ENCODE measurements at regions of chr14 and their contacts with region 1.

Region 1: DNA sequence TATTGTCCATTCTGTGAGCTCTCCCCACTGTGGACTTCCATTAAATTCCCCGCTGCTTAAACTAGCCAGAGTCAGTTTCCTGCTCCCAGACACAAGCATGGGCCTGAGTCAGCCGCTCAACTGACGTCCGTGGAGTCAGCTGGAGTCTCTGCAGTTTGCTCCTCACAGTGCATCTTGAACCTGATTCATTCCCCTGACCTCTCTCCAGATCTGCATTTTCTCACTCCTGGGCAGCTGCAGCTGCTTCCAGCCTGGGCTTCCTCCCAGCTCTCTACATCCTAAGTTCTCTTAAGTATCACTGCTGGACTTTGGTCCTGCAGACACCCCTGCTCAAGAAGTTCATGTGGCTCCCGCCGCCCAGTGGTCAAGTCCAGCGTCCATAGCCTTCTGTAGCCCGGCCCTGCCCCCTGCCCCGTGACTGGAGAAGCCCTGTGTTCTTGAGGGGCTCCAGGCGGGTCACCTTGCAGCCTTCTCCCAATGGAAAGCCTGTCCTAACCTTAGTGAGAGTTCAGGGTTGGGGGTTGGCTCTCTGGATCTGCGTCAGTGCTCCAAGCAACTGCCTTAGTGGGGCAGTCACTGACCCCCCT is 20.0 kb downstream of the NFKBIA start:
- DNase-seq: no peak
- H3K4me3 ChIP-seq: no peak overlapping the region
- H3K27ac ChIP-seq: no peak overlapping the region
- H3K4me1 ChIP-seq: peaks cover 9% of the 10 kb centered on the region
- H3K27me3 ChIP-seq: no peaks in the 10 kb centered on the region
- CTCF ChIP-seq: no peak

Region 2: DNA sequence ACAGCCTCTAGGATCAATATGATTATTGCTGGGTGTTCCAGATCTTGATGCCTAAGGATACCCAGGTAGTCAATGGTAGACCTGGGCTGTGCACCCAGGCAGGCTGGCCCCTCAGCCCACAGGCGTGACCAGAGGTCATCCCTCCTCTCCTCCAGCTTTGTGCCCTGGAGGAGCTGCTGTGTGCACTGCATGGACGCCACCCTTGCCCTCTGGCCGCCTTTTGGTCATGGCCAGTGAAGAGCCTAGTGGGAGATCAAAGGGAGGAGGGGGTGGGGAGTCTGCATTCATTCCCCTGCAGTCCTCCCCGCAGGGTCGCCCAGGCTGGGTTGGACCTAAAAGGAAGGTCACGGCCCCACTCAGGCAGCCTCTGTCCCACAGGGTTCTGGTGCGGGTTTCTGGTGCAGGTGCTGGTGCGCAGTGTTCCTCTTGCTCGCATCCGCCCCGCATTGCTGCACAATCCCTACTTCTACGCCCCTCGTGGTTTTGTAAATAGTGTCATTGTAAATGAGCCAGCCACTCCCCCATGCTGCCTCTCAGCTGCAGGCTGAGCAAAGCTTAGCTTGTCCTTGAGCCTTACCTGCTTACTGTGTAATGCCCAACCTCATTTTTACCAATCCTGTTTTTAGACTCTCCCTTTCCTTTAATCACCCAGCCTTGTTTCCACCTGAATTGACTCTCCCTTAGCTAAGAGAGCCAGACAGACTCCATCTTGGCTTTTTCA is 37.1 kb before region 1 on chr14:
- CTCF ChIA-PET with region 1: no interaction called
- dilution Hi-C with region 1: loop called (anchors 5 kb)
- in situ Hi-C with region 1: no loop called
- intact Hi-C with region 1: no loop called
- DNase-seq: no peak
- H3K4me3 ChIP-seq: no peak overlapping the region
- H3K27ac ChIP-seq: no peak overlapping the region
- H3K4me1 ChIP-seq: peaks cover under 1% of the 10 kb centered on the region
- H3K27me3 ChIP-seq: no peaks in the 10 kb centered on the region
- CTCF ChIP-seq: no peak

Region 3: GRCh38 chr14:35760143-35760542 is 375.6 kb after region 1 on chr14:
- CTCF ChIA-PET with region 1: no interaction called
- dilution Hi-C with region 1: no loop called
- in situ Hi-C with region 1: no loop called
- intact Hi-C with region 1: no loop called
- DNase-seq: no peak
- H3K4me3 ChIP-seq: no peak overlapping the region
- H3K27ac ChIP-seq: no peak overlapping the region
- H3K4me1 ChIP-seq: no peaks in the 10 kb centered on the region
- H3K27me3 ChIP-seq: no peaks in the 10 kb centered on the region
- CTCF ChIP-seq: no peak

Measured in mammary epithelial cell (primary cell).